Vagina (tissue), 2 donors: ENCODE measurements at regions of chr9 and their contacts with region 1.

Region 1: DNA sequence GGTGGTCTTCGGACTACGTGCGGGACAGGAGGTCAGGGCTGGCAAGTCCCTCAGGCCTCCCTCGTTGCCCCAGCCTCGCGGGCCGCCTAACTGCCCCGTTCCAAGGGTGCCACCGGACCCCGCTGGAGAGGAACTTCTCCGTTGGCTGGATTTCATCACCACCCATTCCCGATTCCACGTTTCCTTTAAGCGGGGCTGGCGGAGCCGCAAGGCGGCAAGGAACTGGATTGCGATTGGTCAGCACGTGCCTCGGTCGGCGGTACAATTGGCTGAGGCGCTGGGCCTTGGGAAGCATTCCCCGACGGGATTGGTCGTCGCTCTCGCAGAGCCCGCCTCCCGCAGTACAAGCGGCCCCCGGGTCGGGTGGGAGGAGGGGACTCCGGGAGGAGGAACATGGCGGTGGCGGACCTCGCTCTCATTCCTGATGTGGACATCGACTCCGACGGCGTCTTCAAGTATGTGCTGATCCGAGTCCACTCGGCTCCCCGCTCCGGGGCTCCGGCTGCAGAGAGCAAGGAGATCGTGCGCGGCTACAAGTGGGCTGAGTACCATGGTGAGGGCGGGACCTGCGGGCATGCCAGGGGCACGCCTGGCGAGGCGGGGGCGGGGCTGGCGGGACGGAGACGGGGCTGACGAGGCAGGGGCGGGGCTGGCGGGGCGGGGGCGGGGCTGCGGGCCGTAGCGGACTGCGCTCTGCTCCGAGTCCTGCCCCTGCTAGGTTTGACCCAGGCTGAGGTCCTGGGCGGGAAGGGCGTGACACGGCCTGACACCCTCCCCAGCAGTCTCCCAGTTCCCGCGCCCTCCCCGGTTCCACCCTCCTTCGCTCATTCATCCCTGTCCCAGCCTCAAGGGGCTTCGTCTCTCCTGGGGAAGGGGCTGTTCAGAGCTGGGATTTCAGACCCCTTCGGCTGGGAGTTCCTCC is at the start of gene PHPT1:
- DNase-seq: peak in 1 of 2 donors; percentile 99
- H3K4me3 ChIP-seq: peak within 1 kb of the TSS; percentile 71 to 72
- H3K27ac ChIP-seq: peak within 1 kb of the TSS; percentile 87
- H3K4me1 ChIP-seq: peaks cover 46% of the 10 kb centered on the region
- H3K27me3 ChIP-seq: peaks cover 13% of the 10 kb centered on the region
- CTCF ChIP-seq: no peak
- POLR2A ChIP-seq: peak in 1 of 2 donors; percentile 73
- total RNA-seq, gene PHPT1: 38.1 TPM

Region 2: DNA sequence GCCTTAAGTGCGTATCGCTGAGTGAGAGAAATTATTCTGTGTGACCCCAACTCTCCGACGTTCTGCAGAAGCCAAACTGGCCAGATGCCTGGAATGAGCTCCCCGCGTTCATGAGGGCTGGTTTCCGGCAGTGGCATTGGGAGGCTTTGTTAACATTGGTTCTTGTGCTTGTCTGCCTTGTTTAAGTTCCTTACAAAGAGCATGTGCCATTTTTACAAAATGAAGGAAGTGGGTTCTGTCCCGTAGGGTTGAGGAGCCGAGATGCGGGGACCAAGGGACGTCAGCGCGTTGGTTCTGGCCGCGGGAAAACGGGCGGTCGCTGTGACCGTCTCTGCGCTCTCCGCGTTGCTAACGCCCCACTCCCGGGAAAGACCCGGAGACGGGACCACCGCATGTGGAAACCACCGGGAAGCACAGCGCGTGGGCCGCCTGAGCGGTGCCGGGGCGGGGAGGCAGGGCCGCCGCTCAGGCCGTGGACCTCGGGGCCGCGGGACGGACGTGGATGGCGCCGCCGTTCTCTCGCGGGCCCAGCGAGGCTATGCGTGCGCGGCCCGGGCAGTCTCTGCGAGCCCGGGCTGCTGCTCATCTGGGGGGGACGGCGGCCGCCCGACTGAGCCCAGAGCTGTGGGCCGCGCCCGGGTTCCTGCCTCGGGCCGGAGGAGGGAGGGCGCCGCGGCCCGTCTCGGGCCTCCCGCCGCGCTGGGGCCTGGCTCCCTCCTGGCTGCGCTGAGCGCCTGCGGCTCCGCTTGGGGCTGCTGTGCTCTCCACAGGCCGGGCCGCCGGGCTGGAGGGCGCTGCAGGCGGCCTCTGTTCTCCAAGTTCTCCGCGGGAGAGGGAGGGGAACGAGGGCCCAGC is 28.1 kb before region 1 on chr9:
- intact Hi-C with region 1: loop called (anchors 2 kb)
- DNase-seq: no peak
- H3K4me3 ChIP-seq: peak overlapping the region; percentile 33 to 47
- H3K27ac ChIP-seq: no peak overlapping the region
- H3K4me1 ChIP-seq: peaks cover 18% of the 10 kb centered on the region
- H3K27me3 ChIP-seq: no peaks in the 10 kb centered on the region
- CTCF ChIP-seq: no peak
- POLR2A ChIP-seq: no peak

Region 3: DNA sequence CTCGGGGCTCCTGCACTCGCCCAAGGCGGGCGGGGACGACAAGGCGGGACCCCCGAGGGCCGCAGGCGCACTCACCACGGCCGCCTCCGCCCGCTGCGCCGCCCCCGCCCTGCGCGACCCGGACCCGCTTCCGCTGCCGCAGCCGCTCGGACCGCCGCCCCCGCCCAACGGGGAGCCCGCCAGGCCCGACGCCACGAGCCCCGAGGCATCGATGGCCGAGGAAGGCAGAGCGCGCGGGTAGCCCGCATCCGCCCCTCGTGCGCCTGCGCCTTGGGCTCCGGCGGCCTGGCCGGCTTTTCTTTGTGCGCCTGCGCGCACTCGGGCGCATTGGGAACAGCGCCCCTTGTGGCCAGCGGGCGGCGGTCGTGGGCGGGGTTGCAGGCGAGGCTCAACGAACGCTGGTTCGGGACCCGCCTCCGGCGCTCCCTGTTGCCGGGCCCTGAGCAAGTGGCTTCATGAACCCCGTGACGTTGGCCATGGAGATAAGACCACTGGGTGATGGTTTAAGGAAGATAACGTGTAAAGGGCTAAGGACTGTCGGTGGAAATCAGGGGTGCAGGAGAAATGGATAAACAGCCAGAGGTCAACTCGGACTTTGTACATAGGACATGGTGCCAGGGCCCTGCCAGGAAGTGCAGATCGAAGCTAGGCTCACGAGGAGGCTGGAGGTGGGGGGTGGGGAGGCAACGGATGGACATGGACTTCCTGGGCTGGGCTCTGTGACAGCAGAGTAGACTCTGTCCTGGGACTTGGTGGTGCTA is 95.4 kb after region 1 on chr9 and contains the starts of genes C8G and FBXW5:
- intact Hi-C with region 1: loop called (anchors 2 kb)
- DNase-seq: no peak
- H3K4me3 ChIP-seq: peak within 1 kb of the TSS; percentile 60 to 83
- H3K27ac ChIP-seq: peak within 1 kb of the TSS; percentile 77
- H3K4me1 ChIP-seq: peaks cover 47% of the 10 kb centered on the region
- H3K27me3 ChIP-seq: no peaks in the 10 kb centered on the region
- CTCF ChIP-seq: peak; percentile 94 to 100 (median 99)
- POLR2A ChIP-seq: peak in 1 of 2 donors; percentile 54
- total RNA-seq, gene C8G: not detected
- total RNA-seq, gene FBXW5: 125 TPM